CD4-positive, alpha-beta T cell (primary cell): ENCODE measurements at regions of chr3 and their contacts with region 1.

Region 1: GRCh38 chr3:5136211-5136918 is 14.3 kb downstream of the ARL8B start:
- DNase-seq: peak in 9 of 14 experiments; percentile 5 to 81 (median 25)
- ATAC-seq: peak; percentile 94
- H3K4me3 ChIP-seq: no peak overlapping the region
- H3K4me3 Mint-ChIP-seq: no peak overlapping the region
- H3K27ac ChIP-seq: peak overlapping the region in 1 of 2 donors; percentile 41
- H3K27ac Mint-ChIP-seq: peak overlapping the region; percentile 52
- H3K4me1 ChIP-seq: peaks cover 30% of the 10 kb centered on the region
- H3K4me1 Mint-ChIP-seq: peaks cover 81% of the 10 kb centered on the region
- H3K27me3 ChIP-seq: no peaks in the 10 kb centered on the region
- H3K27me3 Mint-ChIP-seq: no peaks in the 10 kb centered on the region
- CTCF ChIP-seq: peak; percentile 73

Region 2: GRCh38 chr3:5187156-5187919 is 51.0 kb after region 1 on chr3 and contains the start of gene EDEM1:
- CTCF ChIA-PET with region 1: interaction called, 5 read pairs
- POLR2A ChIA-PET with region 1: interaction called, 6 read pairs
- intact Hi-C with region 1: loop called in 1 of 2 experiments (anchors 5 kb)
- DNase-seq: peak; percentile 77 to 98 (median 94)
- ATAC-seq: peak; percentile 76
- H3K4me3 ChIP-seq: peak within 1 kb of the TSS; percentile 94
- H3K4me3 Mint-ChIP-seq: peak within 1 kb of the TSS; percentile 98
- H3K27ac ChIP-seq: peak within 1 kb of the TSS; percentile 89 to 94
- H3K27ac Mint-ChIP-seq: peak within 1 kb of the TSS; percentile 98
- H3K4me1 ChIP-seq: peaks cover 25% of the 10 kb centered on the region
- H3K4me1 Mint-ChIP-seq: peaks cover 39% of the 10 kb centered on the region
- H3K27me3 ChIP-seq: no peaks in the 10 kb centered on the region
- H3K27me3 Mint-ChIP-seq: no peaks in the 10 kb centered on the region
- CTCF ChIP-seq: no peak
- total RNA-seq, gene EDEM1: 106 to 114 TPM

Region 3: DNA sequence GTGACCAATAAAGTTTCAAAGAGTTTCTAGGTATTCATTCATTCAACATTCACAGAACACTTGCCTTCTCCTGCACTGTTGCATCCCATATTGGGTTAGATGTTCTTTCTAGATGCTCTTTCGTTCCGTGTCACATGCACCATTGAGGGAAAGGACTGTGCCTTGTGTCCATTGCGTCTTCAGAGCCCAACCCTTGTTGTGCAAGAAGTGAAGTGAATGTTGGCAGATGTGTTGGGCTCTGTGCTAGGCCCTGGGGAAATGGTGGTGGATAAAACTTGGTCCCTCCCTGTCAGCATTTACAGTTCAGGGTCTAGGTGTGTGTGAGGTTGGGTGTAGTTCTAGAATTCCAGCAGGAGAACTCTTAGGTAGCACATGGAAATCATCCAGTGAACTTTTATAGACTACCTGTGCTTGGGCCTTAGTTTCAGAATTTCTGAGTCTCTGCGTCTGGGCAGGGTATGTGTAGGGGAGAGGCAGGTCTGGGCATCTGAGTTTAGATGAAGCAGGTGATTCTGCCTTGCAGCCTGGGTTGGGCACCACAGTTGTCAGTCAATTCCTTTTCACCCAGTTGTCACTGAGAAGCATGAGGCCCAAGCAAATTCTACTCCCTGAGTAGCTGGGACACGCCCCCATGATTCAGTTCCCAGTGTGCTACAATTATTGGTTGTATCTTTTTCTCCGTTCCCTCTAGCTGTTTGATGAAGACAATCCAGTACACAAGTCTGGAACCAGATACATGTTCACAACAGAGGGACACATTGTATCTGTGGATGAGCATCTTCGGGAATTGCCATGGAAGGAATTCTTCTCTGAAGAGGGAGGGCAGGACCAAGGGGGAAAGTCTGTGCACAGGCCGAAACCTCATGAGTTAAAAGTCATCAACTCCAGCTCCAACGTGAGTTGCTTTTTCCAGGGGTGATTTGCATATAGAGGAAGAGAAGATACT is 76.5 kb after region 1 on chr3:
- CTCF ChIA-PET with region 1: no interaction called
- POLR2A ChIA-PET with region 1: no interaction called
- intact Hi-C with region 1: loop called in 1 of 2 experiments (anchors 5 kb)
- DNase-seq: no peak
- ATAC-seq: no peak
- H3K4me3 ChIP-seq: no peak overlapping the region
- H3K4me3 Mint-ChIP-seq: no peak overlapping the region
- H3K27ac ChIP-seq: no peak overlapping the region
- H3K27ac Mint-ChIP-seq: peak overlapping the region; percentile 28
- H3K4me1 ChIP-seq: no peaks in the 10 kb centered on the region
- H3K4me1 Mint-ChIP-seq: peaks cover 4% of the 10 kb centered on the region
- H3K27me3 ChIP-seq: no peaks in the 10 kb centered on the region
- H3K27me3 Mint-ChIP-seq: no peaks in the 10 kb centered on the region
- CTCF ChIP-seq: no peak

Region 4: GRCh38 chr3:5304789-5305683 is 168.7 kb after region 1 on chr3:
- CTCF ChIA-PET with region 1: no interaction called
- POLR2A ChIA-PET with region 1: no interaction called
- intact Hi-C with region 1: loop called (anchors 2 to 5 kb)
- DNase-seq: peak in 6 of 14 experiments; percentile 0 to 40 (median 18)
- ATAC-seq: no peak
- H3K4me3 ChIP-seq: no peak overlapping the region
- H3K4me3 Mint-ChIP-seq: no peak overlapping the region
- H3K27ac ChIP-seq: no peak overlapping the region
- H3K27ac Mint-ChIP-seq: no peak overlapping the region
- H3K4me1 ChIP-seq: no peaks in the 10 kb centered on the region
- H3K4me1 Mint-ChIP-seq: no peaks in the 10 kb centered on the region
- H3K27me3 ChIP-seq: no peaks in the 10 kb centered on the region
- H3K27me3 Mint-ChIP-seq: no peaks in the 10 kb centered on the region
- CTCF ChIP-seq: peak; percentile 42

Region 5: GRCh38 chr3:5489536-5489935 is 353.2 kb after region 1 on chr3:
- CTCF ChIA-PET with region 1: no interaction called
- POLR2A ChIA-PET with region 1: no interaction called
- intact Hi-C with region 1: no loop called
- DNase-seq: no peak
- ATAC-seq: no peak
- H3K4me3 ChIP-seq: no peak overlapping the region
- H3K4me3 Mint-ChIP-seq: no peak overlapping the region
- H3K27ac ChIP-seq: no peak overlapping the region
- H3K27ac Mint-ChIP-seq: no peak overlapping the region
- H3K4me1 ChIP-seq: no peaks in the 10 kb centered on the region
- H3K4me1 Mint-ChIP-seq: no peaks in the 10 kb centered on the region
- H3K27me3 ChIP-seq: no peaks in the 10 kb centered on the region
- H3K27me3 Mint-ChIP-seq: peaks cover 9% of the 10 kb centered on the region
- CTCF ChIP-seq: no peak